Esophagus muscularis mucosa (tissue), 4 donors: ENCODE measurements at regions of chr10 and their contacts with region 1.

Region 1: GRCh38 chr10:86775056-86775869 is 18.8 kb downstream of the BMPR1A start:
- DNase-seq: no peak
- H3K4me3 ChIP-seq: no peak overlapping the region
- H3K27ac ChIP-seq: peak overlapping the region; percentile 33 to 62 (median 39)
- H3K4me1 ChIP-seq: peaks cover 18 to 85% (median 75%) of the 10 kb centered on the region in 4 donors
- H3K27me3 ChIP-seq: no peaks in the 10 kb centered on the region
- CTCF ChIP-seq: no peak
- EP300 ChIP-seq: no peak
- POLR2A ChIP-seq: no peak

Region 2: DNA sequence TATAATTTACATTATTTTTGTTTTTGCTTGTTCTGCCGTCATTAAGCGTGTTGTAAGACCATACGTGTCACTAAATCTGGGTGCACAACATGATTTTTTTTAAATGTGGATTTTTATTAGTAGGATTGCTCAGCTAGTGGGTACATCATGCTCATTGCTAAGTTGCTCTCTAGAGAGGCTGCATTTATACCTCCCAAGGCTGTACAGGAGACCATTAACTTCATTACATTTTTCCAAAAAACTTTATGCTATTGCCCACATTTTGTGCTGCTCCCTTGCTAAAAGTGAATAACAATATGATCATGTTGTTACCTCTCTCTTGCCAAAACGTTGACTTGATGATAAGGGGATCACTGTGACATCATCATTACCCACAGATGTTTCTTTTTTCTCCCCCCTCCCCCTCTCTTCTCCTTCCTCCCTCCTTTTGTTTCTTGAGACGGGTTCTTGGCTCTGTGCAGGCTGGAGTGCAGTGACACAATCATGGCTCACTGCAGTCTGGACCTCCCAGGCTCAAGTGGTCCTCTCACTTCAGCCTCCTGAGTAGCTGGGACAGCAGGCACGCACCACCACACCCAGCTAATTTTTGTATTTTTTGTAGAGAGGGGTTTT is 46.2 kb after region 1 on chr10:
- intact Hi-C with region 1: loop called (anchors 5 kb)
- DNase-seq: no peak
- H3K4me3 ChIP-seq: no peak overlapping the region
- H3K27ac ChIP-seq: no peak overlapping the region
- H3K4me1 ChIP-seq: peaks cover 17 to 88% (median 81%) of the 10 kb centered on the region in 4 donors
- H3K27me3 ChIP-seq: no peaks in the 10 kb centered on the region
- CTCF ChIP-seq: no peak
- EP300 ChIP-seq: no peak
- POLR2A ChIP-seq: no peak